Right cardiac atrium (tissue), 5 donors: ENCODE measurements at regions of chr6 and their contacts with region 1.

Region 1: GRCh38 chr6:166786704-166787293 is 159.7 kb upstream of the RPS6KA2 start:
- DNase-seq: no peak
- ATAC-seq: peak in 1 of 2 donors; percentile 47
- H3K4me3 ChIP-seq: no peak overlapping the region
- H3K27ac ChIP-seq: no peak overlapping the region
- H3K4me1 ChIP-seq: no peaks in the 10 kb centered on the region
- H3K27me3 ChIP-seq: no peaks in the 10 kb centered on the region

Region 2: DNA sequence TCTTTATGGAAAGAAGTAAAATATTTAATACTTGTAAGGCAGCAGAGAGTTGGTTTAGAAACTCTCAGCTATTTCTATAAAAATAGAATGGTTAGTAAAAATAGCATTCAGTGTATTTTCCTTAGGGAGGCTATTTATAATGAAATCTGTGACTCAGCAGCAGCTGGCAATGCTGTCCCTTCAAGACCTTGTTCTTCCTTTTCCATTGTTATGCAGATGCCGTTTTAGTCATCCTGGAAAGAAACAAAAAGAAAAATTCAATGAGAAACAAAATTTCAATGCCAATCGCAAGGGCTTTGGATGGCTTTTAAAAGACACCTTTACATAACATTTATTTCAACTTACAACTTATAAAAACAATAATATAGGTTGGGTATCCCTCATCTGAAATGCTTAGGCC is 421.6 kb before region 1 on chr6:
- intact Hi-C with region 1: no loop called
- DNase-seq: no peak
- ATAC-seq: peak in 1 of 2 donors; percentile 59
- H3K4me3 ChIP-seq: no peak overlapping the region
- H3K27ac ChIP-seq: no peak overlapping the region
- H3K4me1 ChIP-seq: peaks cover 7% of the 10 kb centered on the region
- H3K27me3 ChIP-seq: no peaks in the 10 kb centered on the region

Region 3: GRCh38 chr6:166598441-166599138 is 188.2 kb before region 1 on chr6:
- intact Hi-C with region 1: no loop called
- DNase-seq: peak; percentile 66 to 76 (median 69)
- ATAC-seq: peak; percentile 92 to 98
- H3K4me3 ChIP-seq: no peak overlapping the region
- H3K27ac ChIP-seq: peak overlapping the region; percentile 99
- H3K4me1 ChIP-seq: peaks cover 4% of the 10 kb centered on the region
- H3K27me3 ChIP-seq: no peaks in the 10 kb centered on the region

Region 4: GRCh38 chr6:166956444-166957086 is 169.8 kb after region 1 on chr6 and contains the start of gene RNASET2:
- intact Hi-C with region 1: loop called in 1 of 4 experiments (anchors 10 kb)
- DNase-seq: peak; percentile 97 to 99 (median 99)
- ATAC-seq: peak; percentile 99
- H3K4me3 ChIP-seq: peak within 1 kb of the TSS; percentile 73
- H3K27ac ChIP-seq: peak within 1 kb of the TSS; percentile 42
- H3K4me1 ChIP-seq: peaks cover 2% of the 10 kb centered on the region
- H3K27me3 ChIP-seq: no peaks in the 10 kb centered on the region
- total RNA-seq, gene RNASET2: 19.4 to 27.2 (median 22.9) TPM